Calu3 (cell line): ENCODE measurements at regions of chr2 and their contacts with region 1.

Region 1: GRCh38 chr2:142603759-142604158 is 273.7 kb upstream of the KYNU start:
- DNase-seq: no peak
- H3K4me3 Mint-ChIP-seq: no peak overlapping the region
- H3K27ac Mint-ChIP-seq: no peak overlapping the region
- H3K4me1 Mint-ChIP-seq: peaks cover 24% of the 10 kb centered on the region
- H3K27me3 Mint-ChIP-seq: no peaks in the 10 kb centered on the region
- CTCF ChIP-seq: no peak

Region 2: GRCh38 chr2:141911485-141912066 is 692.2 kb before region 1 on chr2:
- CTCF ChIA-PET with region 1: no interaction called
- intact Hi-C with region 1: loop called (anchors 10 kb)
- DNase-seq: peak; percentile 56
- H3K4me3 Mint-ChIP-seq: no peak overlapping the region
- H3K27ac Mint-ChIP-seq: no peak overlapping the region
- H3K4me1 Mint-ChIP-seq: no peaks in the 10 kb centered on the region
- H3K27me3 Mint-ChIP-seq: no peaks in the 10 kb centered on the region
- CTCF ChIP-seq: peak; percentile 24

Region 3: GRCh38 chr2:142165790-142166189 is 438.0 kb before region 1 on chr2:
- CTCF ChIA-PET with region 1: interaction called, 6 read pairs
- intact Hi-C with region 1: loop called (anchors 1 kb)
- DNase-seq: peak; percentile 27
- H3K4me3 Mint-ChIP-seq: no peak overlapping the region
- H3K27ac Mint-ChIP-seq: no peak overlapping the region
- H3K4me1 Mint-ChIP-seq: peaks cover 9% of the 10 kb centered on the region
- H3K27me3 Mint-ChIP-seq: no peaks in the 10 kb centered on the region
- CTCF ChIP-seq: no peak

Region 4: DNA sequence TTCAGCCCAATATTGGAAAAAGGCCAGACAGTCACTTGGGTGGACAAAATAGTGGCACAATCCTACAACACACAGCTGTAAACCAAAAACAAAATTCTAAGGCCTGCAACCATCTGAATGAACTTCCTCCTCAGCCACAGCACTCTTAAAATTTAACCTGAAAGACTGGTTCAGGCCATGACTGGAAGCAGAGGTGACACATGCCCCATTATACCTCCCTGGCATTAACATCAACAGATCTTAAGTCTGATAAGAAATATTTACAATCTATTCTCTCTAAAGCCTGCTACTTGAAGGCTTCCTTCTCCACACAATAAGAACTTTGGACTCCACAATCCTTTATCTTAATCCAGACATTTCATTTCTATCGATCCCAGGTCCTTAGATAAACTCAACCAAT is 280.6 kb before region 1 on chr2:
- CTCF ChIA-PET with region 1: no interaction called
- intact Hi-C with region 1: loop called (anchors 1 kb)
- DNase-seq: peak; percentile 58
- H3K4me3 Mint-ChIP-seq: peak overlapping the region; percentile 4
- H3K27ac Mint-ChIP-seq: peak overlapping the region; percentile 3
- H3K4me1 Mint-ChIP-seq: peaks cover 42% of the 10 kb centered on the region
- H3K27me3 Mint-ChIP-seq: no peaks in the 10 kb centered on the region
- CTCF ChIP-seq: no peak

Region 5: DNA sequence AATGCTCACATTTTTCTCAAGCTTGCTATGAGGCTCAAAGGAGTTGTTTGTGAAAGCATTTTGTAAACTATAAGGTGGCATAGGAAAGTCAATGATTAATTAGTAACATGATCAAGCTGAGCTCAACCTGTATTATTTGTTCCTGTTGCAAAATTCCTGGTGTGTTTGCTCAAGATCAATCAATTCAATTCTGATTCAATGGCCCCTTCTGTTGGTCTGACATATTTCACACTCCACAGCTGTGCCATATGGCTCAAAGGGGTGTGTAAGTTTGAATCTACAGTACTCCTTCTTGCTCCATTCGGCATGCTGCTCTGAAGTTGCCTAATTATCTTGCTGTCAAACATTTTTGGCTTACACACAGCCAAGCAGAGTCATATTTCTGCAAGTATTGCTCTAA is 131.4 kb before region 1 on chr2:
- CTCF ChIA-PET with region 1: no interaction called
- intact Hi-C with region 1: loop called (anchors 5 kb)
- DNase-seq: peak; percentile 31
- H3K4me3 Mint-ChIP-seq: no peak overlapping the region
- H3K27ac Mint-ChIP-seq: no peak overlapping the region
- H3K4me1 Mint-ChIP-seq: peaks cover 29% of the 10 kb centered on the region
- H3K27me3 Mint-ChIP-seq: no peaks in the 10 kb centered on the region
- CTCF ChIP-seq: no peak

Region 6: GRCh38 chr2:142629193-142629592 is 25.4 kb after region 1 on chr2:
- CTCF ChIA-PET with region 1: no interaction called
- intact Hi-C with region 1: no loop called
- DNase-seq: no peak
- H3K4me3 Mint-ChIP-seq: no peak overlapping the region
- H3K27ac Mint-ChIP-seq: no peak overlapping the region
- H3K4me1 Mint-ChIP-seq: no peaks in the 10 kb centered on the region
- H3K27me3 Mint-ChIP-seq: no peaks in the 10 kb centered on the region
- CTCF ChIP-seq: no peak